ENCODE measurements at regions of chr18 and their contacts with region 1.

Region 1: GRCh38 chr18:59823596-59824195 is 76.1 kb upstream of the PMAIP1 start:
- DNase-seq: peak; percentile 80
- ATAC-seq: peak; percentile 96
- H3K4me3 ChIP-seq: no peak overlapping the region
- H3K27ac ChIP-seq: no peak overlapping the region
- H3K4me1 ChIP-seq: peaks cover 4% of the 10 kb centered on the region
- H3K27me3 ChIP-seq: no peaks in the 10 kb centered on the region; the same call in 1 of the 2 replicates
- CTCF ChIP-seq: peak; percentile 94
- POLR2A ChIP-seq: 0 out of 2 replicates have a peak, but pooled peaks have one; percentile 26
- RAD21 ChIP-seq: peak; percentile 97

Region 2: GRCh38 chr18:59249205-59249774 is 574.4 kb before region 1 on chr18:
- CTCF ChIA-PET with region 1: no interaction called
- POLR2A ChIA-PET with region 1: no interaction called
- dilution Hi-C with region 1: no loop called
- in situ Hi-C with region 1: no loop called
- intact Hi-C with region 1: loop called (anchors 2 kb)
- DNase-seq: peak; percentile 80
- ATAC-seq: peak; percentile 98
- H3K4me3 ChIP-seq: no peak overlapping the region
- H3K27ac ChIP-seq: no peak overlapping the region
- H3K4me1 ChIP-seq: no peaks in the 10 kb centered on the region
- H3K27me3 ChIP-seq: peaks cover 20% of the 10 kb centered on the region
- CTCF ChIP-seq: peak; percentile 77
- POLR2A ChIP-seq: no peak
- RAD21 ChIP-seq: peak; percentile 71

Region 3: DNA sequence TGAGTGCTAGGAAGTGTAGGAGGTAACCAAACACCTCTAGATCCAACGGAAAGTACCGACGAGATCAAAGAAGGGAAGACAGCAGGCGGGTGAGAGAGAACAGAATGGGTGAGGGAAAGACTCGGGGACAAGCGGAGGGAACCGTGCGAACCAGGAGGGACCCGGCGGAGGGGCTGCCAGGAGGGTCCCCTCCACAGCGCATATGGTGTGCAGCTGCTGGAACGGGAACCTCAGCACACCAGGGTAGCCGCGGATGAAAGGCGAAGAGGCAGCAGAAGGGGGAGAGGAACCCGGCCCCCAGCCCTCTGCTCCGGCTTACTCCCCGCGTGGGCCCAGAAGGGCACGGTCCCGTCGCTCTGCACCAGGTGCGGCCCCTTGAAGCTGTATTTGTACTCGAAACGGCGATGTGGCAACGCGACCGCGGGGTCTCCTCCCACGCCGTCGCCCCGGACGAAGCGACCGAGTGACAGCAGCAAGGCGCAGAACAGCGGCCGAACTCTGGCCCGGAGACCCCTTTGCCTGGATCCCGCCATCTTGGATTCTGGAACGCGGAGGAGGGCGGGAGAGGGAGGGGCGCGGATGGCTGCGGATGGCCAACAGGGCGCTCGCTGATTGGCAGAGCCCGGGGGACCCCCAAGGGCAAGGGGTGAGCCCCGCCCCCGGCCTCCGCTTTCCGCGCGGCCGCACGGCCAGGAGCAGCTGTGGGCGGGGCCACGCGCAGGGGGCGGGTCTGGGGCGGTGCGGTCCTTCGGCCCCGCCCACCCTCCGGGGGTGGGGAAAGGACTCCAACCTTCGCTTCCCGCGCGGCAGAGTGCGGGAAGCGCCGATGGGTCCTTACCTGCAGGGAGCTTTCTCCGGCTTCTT is 464.8 kb before region 1 on chr18 and contains the start of gene LMAN1:
- CTCF ChIA-PET with region 1: no interaction called
- POLR2A ChIA-PET with region 1: no interaction called
- dilution Hi-C with region 1: no loop called
- in situ Hi-C with region 1: no loop called
- intact Hi-C with region 1: loop called (anchors 5 kb)
- DNase-seq: peak; percentile 91
- ATAC-seq: peak; percentile 99
- H3K4me3 ChIP-seq: peak within 1 kb of the TSS; percentile 99
- H3K27ac ChIP-seq: peak within 1 kb of the TSS; percentile 97
- H3K4me1 ChIP-seq: no peaks in the 10 kb centered on the region; the same call in 1 of the 2 replicates
- H3K27me3 ChIP-seq: peaks cover 6% of the 10 kb centered on the region
- CTCF ChIP-seq: no peak
- POLR2A ChIP-seq: peak; percentile 94
- RAD21 ChIP-seq: no peak
- total RNA-seq, gene LMAN1: 213 and 262 TPM in 2 replicates

Region 4: GRCh38 chr18:59459369-59460079 is 364.2 kb before region 1 on chr18:
- CTCF ChIA-PET with region 1: interaction called, 37 read pairs
- POLR2A ChIA-PET with region 1: no interaction called
- dilution Hi-C with region 1: no loop called
- in situ Hi-C with region 1: loop called (anchors 5 kb)
- intact Hi-C with region 1: loop called (anchors 1 kb)
- DNase-seq: peak; percentile 75
- ATAC-seq: peak; percentile 86
- H3K4me3 ChIP-seq: no peak overlapping the region
- H3K27ac ChIP-seq: peak overlapping the region; percentile 36; the same call in 1 of the 2 replicates
- H3K4me1 ChIP-seq: peaks cover 5% of the 10 kb centered on the region
- H3K27me3 ChIP-seq: no peaks in the 10 kb centered on the region
- CTCF ChIP-seq: peak; percentile 77
- POLR2A ChIP-seq: no peak
- RAD21 ChIP-seq: peak; percentile 82

Region 5: GRCh38 chr18:59631583-59632181 is 192.0 kb before region 1 on chr18:
- CTCF ChIA-PET with region 1: interaction called, 33 read pairs
- POLR2A ChIA-PET with region 1: no interaction called
- dilution Hi-C with region 1: no loop called
- in situ Hi-C with region 1: loop called (anchors 5 kb)
- intact Hi-C with region 1: loop called (anchors 1 kb)
- DNase-seq: peak; percentile 58
- ATAC-seq: peak; percentile 73
- H3K4me3 ChIP-seq: no peak overlapping the region
- H3K27ac ChIP-seq: no peak overlapping the region
- H3K4me1 ChIP-seq: peaks cover 9% of the 10 kb centered on the region
- H3K27me3 ChIP-seq: no peaks in the 10 kb centered on the region
- CTCF ChIP-seq: peak; percentile 78
- POLR2A ChIP-seq: no peak
- RAD21 ChIP-seq: peak; percentile 89

Region 6: GRCh38 chr18:59783138-59783537 is 40.6 kb before region 1 on chr18:
- CTCF ChIA-PET with region 1: interaction called, 22 read pairs
- POLR2A ChIA-PET with region 1: no interaction called
- dilution Hi-C with region 1: no loop called
- in situ Hi-C with region 1: no loop called
- intact Hi-C with region 1: loop called (anchors 1 kb)
- DNase-seq: peak; percentile 74
- ATAC-seq: peak; percentile 71
- H3K4me3 ChIP-seq: no peak overlapping the region
- H3K27ac ChIP-seq: no peak overlapping the region
- H3K4me1 ChIP-seq: peaks cover 9% of the 10 kb centered on the region
- H3K27me3 ChIP-seq: no peaks in the 10 kb centered on the region
- CTCF ChIP-seq: peak; percentile 62
- POLR2A ChIP-seq: no peak
- RAD21 ChIP-seq: peak; percentile 63

Region 7: GRCh38 chr18:60090170-60090569 is 266.5 kb after region 1 on chr18:
- CTCF ChIA-PET with region 1: no interaction called
- POLR2A ChIA-PET with region 1: no interaction called
- dilution Hi-C with region 1: no loop called
- in situ Hi-C with region 1: no loop called
- intact Hi-C with region 1: no loop called
- DNase-seq: no peak
- ATAC-seq: no peak
- H3K4me3 ChIP-seq: no peak overlapping the region
- H3K27ac ChIP-seq: no peak overlapping the region
- H3K4me1 ChIP-seq: no peaks in the 10 kb centered on the region
- H3K27me3 ChIP-seq: peaks cover 5% of the 10 kb centered on the region
- CTCF ChIP-seq: no peak
- POLR2A ChIP-seq: no peak
- RAD21 ChIP-seq: no peak

Measured in IMR-90 (cell line).